RWPE1 (cell line): ENCODE measurements at regions of chr17 and their contacts with region 1.

Region 1: DNA sequence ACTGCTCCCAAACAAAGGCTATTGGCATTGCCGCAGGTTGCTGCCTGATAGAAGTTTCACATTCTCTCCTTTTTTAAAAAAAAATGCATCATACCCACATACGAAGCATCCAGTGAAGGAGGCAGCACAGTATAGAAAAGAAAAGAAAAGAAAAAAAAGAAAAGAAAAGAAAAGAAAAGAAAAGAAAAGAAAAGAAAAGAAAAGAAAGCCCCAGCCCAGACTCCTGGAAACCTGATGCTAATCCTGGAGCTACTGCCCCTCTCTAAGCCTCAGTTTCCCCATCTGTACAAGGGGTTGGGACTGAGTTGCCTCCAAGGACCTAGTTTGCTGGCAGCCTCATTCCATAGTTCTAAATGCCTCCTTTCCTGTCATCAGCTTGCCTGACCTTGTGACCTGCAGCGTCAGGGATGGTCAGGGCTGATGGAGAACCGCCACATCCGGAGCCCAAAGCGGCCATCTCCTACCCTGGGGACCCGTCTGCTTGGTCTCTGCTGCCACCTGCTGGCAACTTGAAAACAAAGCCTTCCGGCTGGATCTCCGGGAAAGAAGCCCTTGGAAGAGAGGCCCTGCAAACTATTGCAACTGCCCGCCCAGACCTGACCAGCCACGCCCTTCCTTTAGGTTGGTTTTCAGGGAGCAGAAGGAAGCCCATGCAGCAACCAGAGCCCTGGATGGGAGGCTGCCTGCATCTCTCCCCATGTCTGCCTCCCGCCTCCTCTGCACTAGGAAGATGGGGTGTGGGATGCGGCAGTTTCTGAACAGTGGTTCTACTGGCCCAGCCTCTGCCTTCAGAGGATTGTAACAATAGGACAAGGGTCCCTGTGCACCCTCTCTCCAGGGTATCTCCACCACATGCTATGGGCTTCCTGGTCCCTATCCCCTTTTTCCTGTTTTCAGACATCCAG is 13.0 kb downstream of the AIPL1 start:
- DNase-seq: peak; percentile 84
- H3K27ac ChIP-seq: no peak overlapping the region
- CTCF ChIP-seq: peak; percentile 88

Region 2: GRCh38 chr17:5587438-5588032 is 834.4 kb before region 1 on chr17:
- CTCF ChIA-PET with region 1: interaction called, 10 read pairs
- POLR2A ChIA-PET with region 1: interaction called, 5 read pairs
- DNase-seq: peak; percentile 67
- H3K27ac ChIP-seq: no peak overlapping the region
- CTCF ChIP-seq: peak; percentile 86